Endothelial cell of umbilical vein (primary cell): ENCODE measurements at regions of chr18 and their contacts with region 1.

Region 1: DNA sequence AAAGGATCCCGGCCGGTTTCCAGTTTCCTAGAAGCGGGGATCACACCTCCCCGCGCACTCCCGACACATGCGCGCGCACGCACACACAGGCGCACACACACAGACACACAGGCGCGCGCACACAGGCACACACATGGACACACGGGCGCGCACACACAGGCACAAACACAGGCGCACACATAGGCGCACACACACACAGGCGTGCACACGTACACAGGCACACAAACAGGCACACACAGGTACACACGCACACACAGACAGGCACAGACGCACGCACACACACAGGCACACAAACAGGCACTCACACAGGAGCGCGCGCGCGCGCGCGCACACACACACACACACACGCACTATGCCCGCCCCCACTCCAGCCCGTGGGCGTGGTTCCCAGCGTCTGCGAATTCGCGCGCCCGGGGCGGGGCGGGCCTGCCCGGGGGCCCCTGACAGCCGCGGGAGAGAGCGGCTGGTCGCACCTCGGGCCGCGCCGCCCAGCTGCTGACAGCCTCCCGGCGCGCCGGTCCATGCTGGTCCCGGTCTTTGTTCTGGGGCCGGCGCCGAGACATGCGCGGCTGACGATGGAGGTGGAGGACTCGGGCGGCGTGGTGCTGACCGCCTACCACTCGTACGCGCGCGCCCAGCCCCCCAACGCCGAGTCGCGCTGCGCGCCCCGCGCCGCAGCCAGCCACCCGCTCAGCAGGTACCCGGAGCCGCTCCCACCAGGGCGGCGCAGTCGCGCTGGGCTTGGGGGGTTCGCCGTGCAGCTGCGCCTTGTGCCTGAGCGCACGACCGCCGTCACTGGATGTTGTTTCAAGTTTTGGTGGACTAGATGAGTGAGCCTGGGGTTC is at the start of gene ARHGAP28:
- DNase-seq: peak; percentile 96
- H3K4me3 ChIP-seq: peak within 1 kb of the TSS; percentile 44 to 84 (median 57)
- H3K27ac ChIP-seq: peak within 1 kb of the TSS; percentile 69
- H3K4me1 ChIP-seq: peaks cover 39% of the 10 kb centered on the region
- H3K27me3 ChIP-seq: peaks cover 0 to 3% of the 10 kb centered on the region in 2 experiments
- CTCF ChIP-seq: peak; percentile 32 to 53
- POLR2A ChIP-seq: peak; percentile 70
- total RNA-seq, gene ARHGAP28: 21.0 and 23.4 TPM in 2 replicates

Region 2: DNA sequence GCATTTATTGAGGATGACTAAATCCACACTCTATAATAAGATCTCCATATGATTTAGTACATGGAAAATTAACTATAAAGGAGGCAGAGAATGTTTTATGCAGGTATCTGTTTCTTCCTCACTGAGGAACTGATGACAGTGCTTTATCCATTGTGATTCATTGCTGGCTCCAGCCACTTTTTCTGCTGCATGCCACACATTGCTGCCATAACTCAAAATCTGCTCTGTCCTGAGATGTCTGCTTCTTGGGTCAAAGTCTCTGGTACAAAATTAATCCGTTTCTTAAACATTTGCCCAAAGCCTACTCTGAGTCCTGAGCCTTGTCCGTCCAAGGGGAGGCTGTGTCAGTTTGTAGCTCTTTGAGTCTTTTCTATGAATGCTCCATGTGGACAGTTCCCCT is 15.5 kb before region 1 on chr18:
- CTCF ChIA-PET with region 1: no interaction called
- POLR2A ChIA-PET with region 1: no interaction called
- dilution Hi-C with region 1: no loop called
- intact Hi-C with region 1: no loop called
- DNase-seq: no peak
- H3K4me3 ChIP-seq: no peak overlapping the region
- H3K27ac ChIP-seq: no peak overlapping the region
- H3K4me1 ChIP-seq: no peaks in the 10 kb centered on the region
- H3K27me3 ChIP-seq: no peaks in the 10 kb centered on the region
- CTCF ChIP-seq: no peak
- POLR2A ChIP-seq: no peak

Region 3: GRCh38 chr18:6741232-6741663 is 11.8 kb after region 1 on chr18:
- CTCF ChIA-PET with region 1: interaction called, 14 read pairs
- POLR2A ChIA-PET with region 1: no interaction called
- dilution Hi-C with region 1: no loop called
- intact Hi-C with region 1: loop called (anchors 1 kb)
- DNase-seq: peak; percentile 97
- H3K4me3 ChIP-seq: no peak overlapping the region
- H3K27ac ChIP-seq: peak overlapping the region; percentile 85
- H3K4me1 ChIP-seq: peaks cover 22% of the 10 kb centered on the region
- H3K27me3 ChIP-seq: no peaks in the 10 kb centered on the region
- CTCF ChIP-seq: no peak
- POLR2A ChIP-seq: no peak

Region 4: DNA sequence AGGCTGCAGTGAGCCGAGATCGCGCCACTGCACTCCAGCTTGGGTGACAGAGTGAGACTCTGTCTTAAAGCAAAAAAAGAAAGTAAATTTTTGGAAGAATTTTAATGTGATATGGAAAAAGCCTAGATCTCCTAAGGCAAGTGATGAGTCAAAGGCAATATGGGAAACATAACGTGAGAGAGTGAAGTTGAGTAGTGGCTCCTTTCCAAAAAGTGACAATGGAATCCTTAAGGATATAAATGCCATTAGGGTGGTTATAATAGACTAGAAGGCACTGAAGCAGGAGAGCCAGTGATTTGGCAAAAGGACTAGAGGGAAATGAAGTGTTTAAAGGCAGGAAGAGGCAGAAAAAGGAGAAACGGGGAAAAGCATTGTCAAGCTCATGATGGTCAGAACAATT is 25.6 kb after region 1 on chr18:
- CTCF ChIA-PET with region 1: no interaction called
- POLR2A ChIA-PET with region 1: no interaction called
- dilution Hi-C with region 1: no loop called
- intact Hi-C with region 1: loop called (anchors 1 kb)
- DNase-seq: peak; percentile 74
- H3K4me3 ChIP-seq: no peak overlapping the region
- H3K27ac ChIP-seq: no peak overlapping the region
- H3K4me1 ChIP-seq: peaks cover 8% of the 10 kb centered on the region
- H3K27me3 ChIP-seq: no peaks in the 10 kb centered on the region
- CTCF ChIP-seq: no peak
- POLR2A ChIP-seq: no peak

Region 5: DNA sequence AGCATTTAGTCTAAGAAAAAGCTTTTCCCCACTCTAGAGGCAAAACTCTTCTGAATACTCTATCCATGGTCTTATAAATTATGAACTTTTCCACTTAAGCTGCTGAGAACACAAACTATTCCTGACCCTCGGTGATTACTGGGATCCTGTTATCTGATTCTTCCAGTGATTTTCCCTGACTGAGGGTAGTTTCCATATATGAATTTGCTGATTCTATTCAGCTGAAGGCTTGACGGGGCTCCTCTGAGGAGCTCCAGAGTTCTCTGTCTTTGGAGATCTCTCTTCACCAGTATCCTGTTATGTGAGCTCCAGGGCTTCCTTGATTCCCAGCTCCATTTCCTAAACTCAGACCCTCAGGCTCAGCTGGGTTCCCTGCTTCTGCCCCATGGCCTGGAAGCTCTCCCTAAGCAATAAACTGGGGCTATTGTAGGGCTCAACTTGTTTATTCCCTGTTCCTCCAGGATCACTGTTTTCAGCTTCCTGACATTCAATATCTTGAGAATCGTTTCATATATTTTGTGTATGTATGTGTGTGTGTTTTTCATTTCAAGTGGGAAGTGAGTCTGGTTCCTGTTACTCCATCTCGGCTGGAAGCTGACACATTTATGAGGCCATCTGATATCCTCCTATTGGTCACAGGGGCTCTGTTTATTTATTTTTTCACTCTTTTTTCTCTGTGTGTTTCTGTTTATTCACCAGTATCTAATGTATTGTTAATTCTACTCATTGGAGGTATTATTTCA is 78.2 kb after region 1 on chr18:
- CTCF ChIA-PET with region 1: interaction called, 15 read pairs
- POLR2A ChIA-PET with region 1: interaction called, 3 read pairs
- dilution Hi-C with region 1: no loop called
- intact Hi-C with region 1: loop called (anchors 1 kb)
- DNase-seq: peak; percentile 97
- H3K4me3 ChIP-seq: peak overlapping the region in 2 of 3 experiments; percentile 21 to 34
- H3K27ac ChIP-seq: peak overlapping the region; percentile 100
- H3K4me1 ChIP-seq: peaks cover 33% of the 10 kb centered on the region
- H3K27me3 ChIP-seq: no peaks in the 10 kb centered on the region
- CTCF ChIP-seq: no peak
- POLR2A ChIP-seq: no peak

Region 6: DNA sequence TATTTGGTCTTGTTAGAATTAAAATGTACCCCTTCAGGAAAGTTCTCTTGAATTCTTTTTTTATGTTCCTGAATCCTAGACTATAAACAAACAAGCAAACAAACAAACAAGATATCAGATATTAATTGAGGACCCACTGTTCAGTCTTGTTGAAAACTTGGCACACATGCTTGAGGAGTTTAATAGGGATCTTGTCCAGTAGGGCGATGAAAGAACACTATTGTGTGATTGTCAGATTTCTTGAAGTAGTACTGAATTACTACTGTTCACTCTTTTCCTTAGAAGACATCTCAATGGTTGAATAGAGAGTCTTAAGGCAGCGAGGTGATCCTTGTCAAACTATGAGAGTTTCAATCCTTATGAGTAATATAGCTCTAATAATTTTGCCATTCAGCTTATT is 967.8 kb after region 1 on chr18:
- CTCF ChIA-PET with region 1: no interaction called
- POLR2A ChIA-PET with region 1: no interaction called
- dilution Hi-C with region 1: no loop called
- intact Hi-C with region 1: no loop called
- DNase-seq: no peak
- H3K4me3 ChIP-seq: no peak overlapping the region
- H3K27ac ChIP-seq: no peak overlapping the region
- H3K4me1 ChIP-seq: no peaks in the 10 kb centered on the region
- H3K27me3 ChIP-seq: no peaks in the 10 kb centered on the region
- CTCF ChIP-seq: no peak
- POLR2A ChIP-seq: no peak